Common myeloid progenitor, CD34-positive (primary cell): ENCODE measurements at regions of chrX and their contacts with region 1.

Region 1: GRCh38 chrX:57951666-57952319 is 41.5 kb upstream of the ZXDA start:
- DNase-seq: peak; percentile 89 to 99 (median 97)
- H3K4me3 ChIP-seq: peak overlapping the region in 1 of 7 experiments; percentile 23
- H3K27ac ChIP-seq: peak overlapping the region; percentile 56 to 82
- H3K4me1 ChIP-seq: peaks cover 0 to 21% (median 18%) of the 10 kb centered on the region in 4 experiments
- H3K27me3 ChIP-seq: no peaks in the 10 kb centered on the region

Region 2: GRCh38 chrX:57900975-57901374 is 50.8 kb before region 1 on chrX:
- CTCF ChIA-PET with region 1: no interaction called
- POLR2A ChIA-PET with region 1: no interaction called
- DNase-seq: no peak
- H3K4me3 ChIP-seq: no peak overlapping the region
- H3K27ac ChIP-seq: no peak overlapping the region
- H3K4me1 ChIP-seq: no peaks in the 10 kb centered on the region
- H3K27me3 ChIP-seq: no peaks in the 10 kb centered on the region

Region 3: GRCh38 chrX:57933321-57933720 is 18.5 kb before region 1 on chrX:
- CTCF ChIA-PET with region 1: interaction called, 13 read pairs
- POLR2A ChIA-PET with region 1: interaction called, 4 read pairs
- DNase-seq: no peak
- H3K4me3 ChIP-seq: no peak overlapping the region
- H3K27ac ChIP-seq: no peak overlapping the region
- H3K4me1 ChIP-seq: no peaks in the 10 kb centered on the region
- H3K27me3 ChIP-seq: no peaks in the 10 kb centered on the region

Region 4: GRCh38 chrX:58025979-58026378 is 74.2 kb after region 1 on chrX:
- CTCF ChIA-PET with region 1: interaction called, 19 read pairs
- POLR2A ChIA-PET with region 1: no interaction called
- DNase-seq: peak; percentile 54 to 77 (median 71)
- H3K4me3 ChIP-seq: no peak overlapping the region
- H3K27ac ChIP-seq: no peak overlapping the region
- H3K4me1 ChIP-seq: peaks cover 0 to 8% (median 5%) of the 10 kb centered on the region in 4 experiments
- H3K27me3 ChIP-seq: no peaks in the 10 kb centered on the region